Sigmoid colon (tissue), 7 donors: ENCODE measurements at regions of chr20 and their contacts with region 1.

Region 1: GRCh38 chr20:46214831-46215488 is 93.3 kb downstream of the CDH22 start:
- DNase-seq: no peak
- H3K4me3 ChIP-seq: no peak overlapping the region
- H3K27ac ChIP-seq: no peak overlapping the region
- H3K4me1 ChIP-seq: no peaks in the 10 kb centered on the region
- H3K27me3 ChIP-seq: peaks cover 0 to 56% (median 8%) of the 10 kb centered on the region in 3 donors
- CTCF ChIP-seq: no peak
- EP300 ChIP-seq: no peak
- POLR2A ChIP-seq: no peak

Region 2: DNA sequence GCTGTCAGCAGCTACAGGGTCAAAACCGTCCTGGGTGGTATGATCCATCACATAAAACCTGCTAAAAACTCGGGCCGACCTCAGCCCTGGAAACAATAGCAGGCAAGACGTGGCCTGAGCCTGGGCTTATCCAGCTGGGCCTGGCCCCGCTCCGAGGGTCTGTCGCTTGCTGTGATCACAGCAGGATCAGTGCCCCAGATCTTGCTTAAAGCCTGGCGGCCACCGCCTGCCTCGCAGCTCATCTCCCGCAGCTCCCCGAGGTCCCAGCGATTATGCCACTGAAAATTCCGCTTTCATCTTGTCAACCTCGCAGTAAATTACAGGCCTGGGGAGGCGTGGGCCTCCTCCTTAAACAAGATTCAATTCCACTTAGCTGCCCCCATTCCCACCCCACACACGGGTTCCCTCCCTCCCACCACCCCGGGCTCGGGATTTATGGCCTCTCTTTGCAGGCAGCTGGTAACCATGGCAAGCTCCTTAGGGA is 53.2 kb after region 1 on chr20:
- intact Hi-C with region 1: loop called (anchors 5 kb)
- DNase-seq: no peak
- H3K4me3 ChIP-seq: no peak overlapping the region
- H3K27ac ChIP-seq: no peak overlapping the region
- H3K4me1 ChIP-seq: no peaks in the 10 kb centered on the region
- H3K27me3 ChIP-seq: peaks cover 4 to 62% (median 22%) of the 10 kb centered on the region in 3 donors
- CTCF ChIP-seq: no peak
- EP300 ChIP-seq: no peak
- POLR2A ChIP-seq: no peak